ENCODE measurements at regions of chr2 and their contacts with region 1.

Region 1: GRCh38 chr2:88669371-88670214 is 21.9 kb upstream of the RPIA start:
- DNase-seq: no peak
- H3K4me3 ChIP-seq: no peak overlapping the region
- H3K27ac ChIP-seq: no peak overlapping the region
- H3K4me1 ChIP-seq: no peaks in the 10 kb centered on the region
- H3K27me3 ChIP-seq: no peaks in the 10 kb centered on the region
- CTCF ChIP-seq: no peak
- EP300 ChIP-seq: no peak
- POLR2A ChIP-seq: no peak

Region 2: DNA sequence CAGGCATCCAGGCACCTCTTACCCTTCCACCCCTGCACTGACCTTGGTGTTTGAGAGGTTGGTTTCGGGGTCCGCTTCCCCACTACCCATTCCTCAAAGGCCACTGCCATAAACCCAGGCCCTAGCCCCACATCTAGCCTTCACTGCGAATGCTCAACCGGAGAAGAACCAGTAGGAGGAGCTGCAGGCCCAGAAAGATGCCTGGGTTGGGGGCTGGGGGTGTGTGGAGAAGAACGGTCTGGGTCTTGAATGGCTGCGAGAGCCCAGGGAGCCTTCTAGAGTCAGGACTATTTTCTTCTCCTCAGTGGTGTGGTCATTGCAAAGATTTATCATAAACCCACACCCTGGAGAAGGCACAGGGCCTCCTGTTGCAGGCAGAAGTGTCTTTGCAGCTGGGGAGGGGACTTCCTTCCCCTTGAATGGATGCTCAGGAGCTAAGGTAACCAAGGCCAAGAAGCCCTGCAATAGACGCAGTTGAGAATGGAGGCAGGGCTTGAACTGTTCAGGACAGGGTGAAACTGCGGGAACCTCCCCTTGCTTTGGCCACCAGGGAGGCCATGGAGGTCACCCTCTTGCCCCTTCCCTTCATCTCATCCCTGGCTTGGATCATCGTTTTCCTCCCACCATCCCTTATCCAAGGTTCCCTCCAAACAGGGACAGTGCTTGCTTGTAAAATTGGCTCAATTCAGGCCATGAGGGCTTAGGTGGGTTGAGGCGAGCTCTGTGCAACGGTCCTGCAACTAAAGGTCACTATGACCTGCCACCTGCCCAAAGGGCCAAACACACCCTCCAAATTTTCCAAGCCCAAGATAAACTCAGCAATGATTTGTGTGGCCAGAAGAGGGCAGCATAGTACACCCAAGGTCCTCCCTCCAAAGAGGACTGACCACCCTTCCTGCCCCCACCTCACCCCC is 478.5 kb before region 1 on chr2:
- intact Hi-C with region 1: loop called in 1 of 4 experiments (anchors 10 kb)
- DNase-seq: peak in 1 of 5 donors; percentile 36
- H3K4me3 ChIP-seq: no peak overlapping the region
- H3K27ac ChIP-seq: no peak overlapping the region
- H3K4me1 ChIP-seq: no peaks in the 10 kb centered on the region
- H3K27me3 ChIP-seq: no peaks in the 10 kb centered on the region
- CTCF ChIP-seq: no peak
- EP300 ChIP-seq: no peak
- POLR2A ChIP-seq: no peak

Region 3: GRCh38 chr2:88590998-88591613 is 78.5 kb before region 1 on chr2:
- intact Hi-C with region 1: loop called in 3 of 4 experiments (anchors 2 to 10 kb)
- DNase-seq: peak in 1 of 5 donors; percentile 29
- H3K4me3 ChIP-seq: no peak overlapping the region
- H3K27ac ChIP-seq: no peak overlapping the region
- H3K4me1 ChIP-seq: no peaks in the 10 kb centered on the region
- H3K27me3 ChIP-seq: no peaks in the 10 kb centered on the region
- CTCF ChIP-seq: peak; percentile 16 to 59 (median 43)
- EP300 ChIP-seq: no peak
- POLR2A ChIP-seq: no peak

Region 4: GRCh38 chr2:88599527-88599926 is 70.1 kb before region 1 on chr2:
- intact Hi-C with region 1: loop called in 2 of 4 experiments (anchors 5 to 10 kb)
- DNase-seq: no peak
- H3K4me3 ChIP-seq: no peak overlapping the region
- H3K27ac ChIP-seq: no peak overlapping the region
- H3K4me1 ChIP-seq: peaks cover 7% of the 10 kb centered on the region
- H3K27me3 ChIP-seq: no peaks in the 10 kb centered on the region
- CTCF ChIP-seq: no peak
- EP300 ChIP-seq: no peak
- POLR2A ChIP-seq: no peak

Region 5: GRCh38 chr2:88709181-88709641 is 39.6 kb after region 1 on chr2:
- intact Hi-C with region 1: no loop called
- DNase-seq: no peak
- H3K4me3 ChIP-seq: no peak overlapping the region
- H3K27ac ChIP-seq: no peak overlapping the region
- H3K4me1 ChIP-seq: no peaks in the 10 kb centered on the region
- H3K27me3 ChIP-seq: no peaks in the 10 kb centered on the region
- CTCF ChIP-seq: no peak
- EP300 ChIP-seq: no peak
- POLR2A ChIP-seq: no peak